PC-9 (cell line): ENCODE measurements at regions of chr4 and their contacts with region 1.

Region 1: GRCh38 chr4:16001484-16001858 is 38.5 kb upstream of the FGFBP2 start:
- DNase-seq: peak; percentile 51 to 65
- H3K4me3 ChIP-seq: no peak overlapping the region
- H3K27ac ChIP-seq: no peak overlapping the region
- H3K4me1 ChIP-seq: no peaks in the 10 kb centered on the region
- H3K27me3 ChIP-seq: no peaks in the 10 kb centered on the region
- CTCF ChIP-seq: peak; percentile 86

Region 2: DNA sequence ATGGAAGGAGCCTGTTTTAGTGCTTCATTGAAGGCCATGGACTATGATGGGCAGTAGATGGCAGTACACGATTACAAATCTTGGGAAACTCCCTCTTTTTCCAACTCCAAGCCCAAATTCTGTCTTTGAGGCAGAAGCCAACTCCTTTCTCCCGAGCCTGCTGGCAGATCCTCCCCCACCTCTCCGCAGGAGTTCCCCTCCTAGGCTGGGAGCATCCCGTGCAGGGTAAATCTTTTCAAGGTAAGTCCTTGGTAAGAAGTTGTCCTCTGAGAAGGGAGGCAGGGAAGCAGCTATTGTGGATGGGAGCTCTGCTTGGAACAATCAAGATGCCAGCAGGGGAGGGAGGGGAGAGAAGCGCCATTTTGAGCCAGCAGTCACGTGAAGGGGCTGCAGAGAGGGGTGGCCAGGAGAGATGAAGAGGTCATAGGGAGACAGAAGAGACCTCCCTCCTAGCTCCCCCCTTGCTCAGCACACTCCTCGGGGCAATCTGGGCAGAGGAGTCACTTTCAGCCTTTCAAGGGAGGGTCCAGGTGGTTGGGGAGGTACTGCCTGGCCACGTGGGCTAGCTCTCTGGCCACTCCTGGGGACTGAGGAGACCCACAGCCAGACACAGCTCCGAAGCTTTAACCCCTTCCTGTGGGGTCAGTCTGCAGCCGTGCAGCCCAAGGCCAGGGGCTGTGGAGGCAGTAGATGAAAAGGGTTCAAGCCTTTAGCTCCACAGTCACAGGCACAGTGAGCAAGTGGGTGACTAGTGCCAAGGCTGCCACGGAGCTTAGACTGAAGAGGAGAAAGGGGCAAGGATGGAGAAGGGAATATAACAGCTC is 522.2 kb before region 1 on chr4:
- CTCF ChIA-PET with region 1: no interaction called
- POLR2A ChIA-PET with region 1: no interaction called
- intact Hi-C with region 1: loop called (anchors 1 kb)
- DNase-seq: peak; percentile 35 to 50
- H3K4me3 ChIP-seq: no peak overlapping the region; the same call in 1 of the 2 replicates
- H3K27ac ChIP-seq: no peak overlapping the region
- H3K4me1 ChIP-seq: no peaks in the 10 kb centered on the region
- H3K27me3 ChIP-seq: no peaks in the 10 kb centered on the region
- CTCF ChIP-seq: peak; percentile 70; the same call in 1 of the 2 replicates

Region 3: DNA sequence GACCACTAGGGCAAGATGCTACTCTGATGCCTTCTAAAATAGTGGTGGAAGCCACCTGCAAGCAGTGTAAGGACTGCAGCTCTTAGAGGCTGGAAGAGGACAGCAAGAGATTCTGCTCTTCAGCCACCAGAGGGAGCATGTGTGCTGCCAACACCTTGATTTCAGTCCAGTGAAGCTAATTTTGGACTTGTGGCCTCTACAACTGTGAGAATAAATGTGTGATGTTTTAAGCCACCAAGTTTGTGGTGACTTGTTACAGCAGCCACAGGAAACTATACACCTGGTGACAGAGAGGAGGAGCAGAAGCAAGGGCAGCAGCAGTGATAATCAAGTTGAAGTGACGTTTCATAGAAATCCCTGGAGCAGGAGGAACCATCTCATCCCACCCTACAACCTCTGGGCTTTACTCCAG is 118.8 kb before region 1 on chr4:
- CTCF ChIA-PET with region 1: interaction called, 4 read pairs
- POLR2A ChIA-PET with region 1: no interaction called
- intact Hi-C with region 1: loop called (anchors 1 kb)
- DNase-seq: peak; percentile 51 to 82
- H3K4me3 ChIP-seq: no peak overlapping the region
- H3K27ac ChIP-seq: 0 out of 2 replicates have a peak overlapping the region, but pooled peaks have one; percentile 7
- H3K4me1 ChIP-seq: no peaks in the 10 kb centered on the region
- H3K27me3 ChIP-seq: no peaks in the 10 kb centered on the region
- CTCF ChIP-seq: peak; percentile 93

Region 4: GRCh38 chr4:15956179-15956850 is 45.2 kb before region 1 on chr4:
- CTCF ChIA-PET with region 1: no interaction called
- POLR2A ChIA-PET with region 1: no interaction called
- intact Hi-C with region 1: loop called (anchors 2 kb)
- DNase-seq: peak; percentile 66 to 73
- H3K4me3 ChIP-seq: no peak overlapping the region
- H3K27ac ChIP-seq: no peak overlapping the region
- H3K4me1 ChIP-seq: peaks cover 5% of the 10 kb centered on the region; the same call in 1 of the 2 replicates
- H3K27me3 ChIP-seq: no peaks in the 10 kb centered on the region
- CTCF ChIP-seq: peak; percentile 93

Region 5: DNA sequence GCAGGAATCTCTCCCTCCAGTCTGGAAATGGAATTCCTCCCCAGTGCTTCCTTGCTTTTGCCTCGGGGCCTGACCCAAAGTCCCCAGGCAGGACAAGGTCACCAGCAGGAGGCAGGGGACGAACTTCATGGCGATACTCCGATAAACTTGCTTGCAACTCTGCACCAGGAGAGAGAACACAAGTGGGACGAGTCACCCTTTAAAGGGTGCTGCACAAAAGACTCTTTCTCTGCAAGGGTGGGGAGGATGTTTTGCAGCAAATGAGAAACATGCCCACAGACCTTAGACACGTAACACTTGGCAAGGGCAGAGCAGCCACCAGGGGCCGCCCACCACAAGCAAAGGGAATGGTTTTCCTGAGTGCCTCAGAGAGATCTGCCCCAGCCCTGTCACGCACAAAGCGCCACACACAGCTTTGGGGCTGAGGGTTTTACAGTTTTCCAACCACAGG is 38.4 kb before region 1 on chr4 and contains the start of gene FGFBP2:
- CTCF ChIA-PET with region 1: no interaction called
- POLR2A ChIA-PET with region 1: no interaction called
- intact Hi-C with region 1: loop called (anchors 1 kb)
- DNase-seq: no peak
- H3K4me3 ChIP-seq: no peak within 1 kb of the TSS
- H3K27ac ChIP-seq: no peak within 1 kb of the TSS
- H3K4me1 ChIP-seq: no peaks in the 10 kb centered on the region
- H3K27me3 ChIP-seq: no peaks in the 10 kb centered on the region; the same call in 1 of the 2 replicates
- CTCF ChIP-seq: peak; percentile 28; the same call in 1 of the 2 replicates
- total RNA-seq, gene FGFBP2: not detected in 2 replicates